Naive thymus-derived CD8-positive, alpha-beta T cell (primary cell): ENCODE measurements at regions of chr7 and their contacts with region 1.

Region 1: GRCh38 chr7:140230861-140231770 is 54.3 kb upstream of the KDM7A start:
- DNase-seq: peak; percentile 36 to 80 (median 50)
- ATAC-seq: peak; percentile 23 to 24
- H3K4me3 Mint-ChIP-seq: peak overlapping the region; percentile 93 to 98 (median 96)
- H3K27ac Mint-ChIP-seq: peak overlapping the region; percentile 96 to 100 (median 99)
- H3K4me1 Mint-ChIP-seq: peaks cover 21 to 59% (median 48%) of the 10 kb centered on the region in 4 donors
- H3K27me3 Mint-ChIP-seq: no peaks in the 10 kb centered on the region

Region 2: DNA sequence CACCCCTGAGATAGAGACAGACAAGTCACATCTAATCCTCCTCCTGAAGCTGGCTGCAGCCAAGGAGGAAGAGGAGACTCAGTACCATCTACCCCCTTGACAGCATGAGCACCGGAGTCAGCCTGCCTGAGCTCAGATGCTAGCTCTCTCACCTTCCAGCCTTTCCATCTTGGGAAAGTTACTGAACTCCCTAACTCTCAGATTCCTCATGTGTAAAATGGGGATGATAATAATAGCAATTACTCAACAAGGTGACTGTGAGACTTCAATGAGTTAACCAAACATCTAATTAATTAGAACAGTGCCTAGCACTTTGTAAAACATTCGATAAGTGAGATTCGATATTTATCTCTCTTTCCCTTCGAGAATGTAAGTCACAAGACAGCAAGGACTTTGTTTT is 60.7 kb before region 1 on chr7:
- POLR2A ChIA-PET with region 1: interaction called, 303 read pairs
- DNase-seq: no peak
- ATAC-seq: no peak
- H3K4me3 Mint-ChIP-seq: peak overlapping the region in 9 of 10 donors; percentile 22 to 70 (median 46)
- H3K27ac Mint-ChIP-seq: no peak overlapping the region
- H3K4me1 Mint-ChIP-seq: peaks cover 29 to 84% (median 74%) of the 10 kb centered on the region in 4 donors
- H3K27me3 Mint-ChIP-seq: no peaks in the 10 kb centered on the region

Region 3: DNA sequence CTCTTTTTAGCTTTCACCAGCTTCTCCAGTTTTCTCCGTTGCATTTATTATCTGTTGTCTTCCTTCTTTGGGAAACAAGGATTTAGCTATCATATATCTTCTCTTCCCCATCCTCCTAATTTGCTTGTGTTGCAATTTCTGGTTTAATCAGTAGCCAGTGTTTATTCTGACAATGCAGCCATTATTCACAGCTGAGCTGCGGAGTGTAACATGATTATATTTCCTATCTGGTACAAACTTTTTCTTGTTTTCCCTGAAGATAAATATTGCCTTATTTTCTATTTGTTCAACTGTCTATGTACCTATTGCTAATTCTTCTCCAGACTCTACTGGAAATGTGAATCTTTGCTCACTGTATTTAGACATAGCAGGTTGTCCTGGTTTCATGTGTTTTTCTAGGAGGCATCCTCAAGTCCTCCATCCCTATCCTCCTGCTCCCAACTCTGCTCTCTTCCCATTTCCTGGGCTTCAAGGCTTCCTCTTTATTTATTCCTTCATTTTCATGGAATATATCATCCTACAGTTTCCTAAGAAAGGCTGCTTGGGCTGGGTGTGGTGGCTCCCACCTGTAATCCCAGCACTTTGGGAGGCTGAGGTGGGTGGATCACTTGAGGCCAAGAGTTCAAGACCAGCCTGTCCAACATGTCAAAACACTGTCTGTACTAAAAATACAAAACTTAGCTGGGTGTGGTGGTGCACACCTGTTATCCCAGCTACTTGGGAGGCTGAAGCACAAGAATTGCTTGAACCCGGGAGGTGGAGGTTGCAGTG is 18.1 kb after region 1 on chr7:
- POLR2A ChIA-PET with region 1: interaction called, 15 read pairs
- DNase-seq: no peak
- ATAC-seq: no peak
- H3K4me3 Mint-ChIP-seq: no peak overlapping the region
- H3K27ac Mint-ChIP-seq: peak overlapping the region in 1 of 10 donors; percentile 21
- H3K4me1 Mint-ChIP-seq: peaks cover 8 to 22% (median 15%) of the 10 kb centered on the region in 4 donors
- H3K27me3 Mint-ChIP-seq: no peaks in the 10 kb centered on the region

Region 4: DNA sequence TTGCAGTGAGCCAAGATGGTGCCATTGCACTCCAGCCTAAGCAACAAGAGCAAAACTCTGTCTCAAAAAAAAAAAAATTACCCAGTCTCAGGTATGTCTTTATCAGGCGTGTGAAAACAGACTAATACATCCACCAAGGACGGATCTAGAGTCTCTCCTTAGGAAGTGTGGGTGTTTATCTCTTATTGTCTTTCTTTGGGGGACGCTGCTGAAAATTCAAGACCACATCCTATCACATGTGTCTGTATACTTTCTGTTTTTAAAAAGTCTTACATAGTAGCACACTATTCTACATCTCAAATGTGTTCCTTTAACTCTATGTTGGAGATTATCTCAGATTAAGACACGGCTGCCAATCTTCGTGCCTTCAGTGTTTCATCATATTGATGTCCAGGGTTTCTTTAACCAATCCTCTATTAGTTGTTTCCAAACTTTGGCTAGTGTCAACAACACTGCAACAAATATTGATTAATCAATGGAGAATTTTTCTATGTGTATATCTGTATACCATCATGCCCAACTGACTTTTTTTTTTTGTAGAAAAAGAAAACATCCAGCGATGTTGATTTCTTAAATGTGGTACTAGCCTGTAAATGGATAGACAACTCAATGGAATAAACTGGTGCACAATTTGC is 38.0 kb after region 1 on chr7:
- POLR2A ChIA-PET with region 1: interaction called, 91 read pairs
- DNase-seq: peak in 4 of 10 donors; percentile 25 to 75 (median 56)
- ATAC-seq: peak; percentile 94 to 95
- H3K4me3 Mint-ChIP-seq: peak overlapping the region; percentile 16 to 70 (median 60)
- H3K27ac Mint-ChIP-seq: peak overlapping the region; percentile 79 to 95 (median 90)
- H3K4me1 Mint-ChIP-seq: peaks cover 18 to 46% (median 38%) of the 10 kb centered on the region in 4 donors
- H3K27me3 Mint-ChIP-seq: no peaks in the 10 kb centered on the region

Region 5: DNA sequence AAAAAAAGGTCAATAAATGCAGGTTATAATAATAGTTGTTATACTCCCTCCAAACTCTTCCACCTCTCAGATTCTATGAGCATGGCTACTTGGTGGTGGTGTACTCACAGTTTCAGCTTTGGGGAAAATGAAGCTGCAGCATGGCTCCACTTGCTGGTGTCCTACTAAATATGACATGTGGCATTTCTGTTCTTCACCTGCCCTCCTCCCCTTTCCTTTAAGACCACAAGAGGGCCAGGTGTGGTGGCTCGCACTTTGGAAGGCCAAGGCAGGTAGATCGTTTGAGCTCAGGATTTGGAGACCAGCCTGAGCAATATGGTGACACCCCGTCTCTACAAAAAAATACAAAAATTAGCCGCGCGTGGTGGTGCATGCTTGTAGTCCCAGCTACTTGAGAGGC is 66.1 kb after region 1 on chr7:
- POLR2A ChIA-PET with region 1: interaction called, 18 read pairs
- DNase-seq: peak in 2 of 10 donors; percentile 9 to 22
- ATAC-seq: peak in 1 of 2 donors; percentile 57
- H3K4me3 Mint-ChIP-seq: no peak overlapping the region
- H3K27ac Mint-ChIP-seq: peak overlapping the region in 2 of 10 donors; percentile 7 to 18
- H3K4me1 Mint-ChIP-seq: peaks cover 2 to 9% (median 5%) of the 10 kb centered on the region in 4 donors
- H3K27me3 Mint-ChIP-seq: no peaks in the 10 kb centered on the region

Region 6: DNA sequence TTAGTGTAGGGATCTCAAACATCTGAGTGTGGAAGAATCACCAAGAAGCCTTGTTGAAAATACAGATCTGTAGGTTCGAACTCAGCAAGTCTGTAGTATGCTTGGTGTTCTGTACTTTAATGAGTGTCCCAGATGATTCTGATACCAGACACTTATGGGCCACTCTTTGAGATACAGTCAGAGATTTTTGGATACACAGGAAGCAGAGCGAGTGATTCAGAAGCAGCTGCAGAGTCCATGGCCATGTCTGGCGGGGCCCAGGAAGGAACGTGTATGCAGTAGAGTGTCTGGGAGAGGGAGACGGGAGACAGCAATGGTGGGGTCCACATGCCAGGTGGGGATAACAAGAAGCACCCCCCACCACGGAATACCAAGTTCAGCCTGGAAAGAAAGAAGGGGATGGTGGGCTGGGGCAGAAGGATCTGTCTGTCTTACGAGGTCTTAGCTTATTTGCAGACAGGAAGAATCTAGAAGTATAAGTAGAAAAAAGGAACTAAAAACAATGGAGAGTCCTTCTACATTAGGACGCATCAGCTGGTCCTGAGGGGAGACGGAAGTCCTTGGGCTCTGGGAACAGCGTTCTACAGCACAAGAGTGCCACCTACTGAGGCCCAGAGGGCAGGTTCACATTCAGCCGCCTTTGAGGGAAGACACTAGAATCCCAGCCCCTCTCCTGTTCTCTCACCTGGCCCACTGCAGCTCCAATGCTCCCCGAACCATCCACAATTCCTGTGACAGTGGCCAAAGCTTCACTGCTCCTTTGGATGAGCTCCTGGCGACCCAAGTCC is 111.8 kb after region 1 on chr7:
- POLR2A ChIA-PET with region 1: no interaction called
- DNase-seq: no peak
- ATAC-seq: no peak
- H3K4me3 Mint-ChIP-seq: no peak overlapping the region
- H3K27ac Mint-ChIP-seq: peak overlapping the region in 2 of 10 donors; percentile 10 to 55
- H3K4me1 Mint-ChIP-seq: peaks cover 0 to 1% (median 0%) of the 10 kb centered on the region in 4 donors
- H3K27me3 Mint-ChIP-seq: no peaks in the 10 kb centered on the region